MCF 10A (cell line): ENCODE measurements at regions of chr1 and their contacts with region 1.

Region 1: GRCh38 chr1:15835741-15836510 is 11.6 kb upstream of the SPEN start:
- DNase-seq: peak; percentile 99
- H3K4me3 Mint-ChIP-seq: peak overlapping the region; percentile 87
- H3K27ac Mint-ChIP-seq: peak overlapping the region; percentile 93
- H3K4me1 Mint-ChIP-seq: peaks cover 6% of the 10 kb centered on the region
- H3K27me3 Mint-ChIP-seq: no peaks in the 10 kb centered on the region
- CTCF ChIP-seq: no peak

Region 2: GRCh38 chr1:15788624-15789301 is 47.2 kb before region 1 on chr1:
- CTCF ChIA-PET with region 1: interaction called, 6 read pairs
- POLR2A ChIA-PET with region 1: interaction called, 27 read pairs
- intact Hi-C with region 1: no loop called
- DNase-seq: peak; percentile 76
- H3K4me3 Mint-ChIP-seq: no peak overlapping the region
- H3K27ac Mint-ChIP-seq: peak overlapping the region; percentile 76
- H3K4me1 Mint-ChIP-seq: peaks cover 26% of the 10 kb centered on the region
- H3K27me3 Mint-ChIP-seq: no peaks in the 10 kb centered on the region
- CTCF ChIP-seq: no peak

Region 3: GRCh38 chr1:15803354-15803753 is 32.6 kb before region 1 on chr1:
- CTCF ChIA-PET with region 1: no interaction called
- POLR2A ChIA-PET with region 1: interaction called, 88 read pairs
- intact Hi-C with region 1: loop called (anchors 2 kb)
- DNase-seq: peak; percentile 54
- H3K4me3 Mint-ChIP-seq: no peak overlapping the region
- H3K27ac Mint-ChIP-seq: no peak overlapping the region
- H3K4me1 Mint-ChIP-seq: peaks cover 38% of the 10 kb centered on the region
- H3K27me3 Mint-ChIP-seq: no peaks in the 10 kb centered on the region
- CTCF ChIP-seq: peak; percentile 36

Region 4: GRCh38 chr1:15825800-15826199 is 10.1 kb before region 1 on chr1:
- CTCF ChIA-PET with region 1: no interaction called
- POLR2A ChIA-PET with region 1: interaction called, 15 read pairs
- intact Hi-C with region 1: no loop called
- DNase-seq: no peak
- H3K4me3 Mint-ChIP-seq: no peak overlapping the region
- H3K27ac Mint-ChIP-seq: no peak overlapping the region
- H3K4me1 Mint-ChIP-seq: peaks cover 12% of the 10 kb centered on the region
- H3K27me3 Mint-ChIP-seq: no peaks in the 10 kb centered on the region
- CTCF ChIP-seq: no peak

Region 5: GRCh38 chr1:15866721-15867201 is 30.8 kb after region 1 on chr1:
- CTCF ChIA-PET with region 1: interaction called, 3 read pairs
- POLR2A ChIA-PET with region 1: interaction called, 11 read pairs
- intact Hi-C with region 1: no loop called
- DNase-seq: no peak
- H3K4me3 Mint-ChIP-seq: no peak overlapping the region
- H3K27ac Mint-ChIP-seq: peak overlapping the region; percentile 73
- H3K4me1 Mint-ChIP-seq: peaks cover 21% of the 10 kb centered on the region
- H3K27me3 Mint-ChIP-seq: no peaks in the 10 kb centered on the region
- CTCF ChIP-seq: no peak

Region 6: GRCh38 chr1:15918962-15919715 is 83.2 kb after region 1 on chr1:
- CTCF ChIA-PET with region 1: interaction called, 6 read pairs
- POLR2A ChIA-PET with region 1: interaction called, 26 read pairs
- intact Hi-C with region 1: loop called (anchors 5 kb)
- DNase-seq: peak; percentile 79
- H3K4me3 Mint-ChIP-seq: peak overlapping the region; percentile 5
- H3K27ac Mint-ChIP-seq: peak overlapping the region; percentile 41
- H3K4me1 Mint-ChIP-seq: peaks cover 23% of the 10 kb centered on the region
- H3K27me3 Mint-ChIP-seq: no peaks in the 10 kb centered on the region
- CTCF ChIP-seq: no peak

Region 7: GRCh38 chr1:15975805-15976680 is 140.1 kb after region 1 on chr1 and contains the start of gene ZBTB17:
- CTCF ChIA-PET with region 1: no interaction called
- POLR2A ChIA-PET with region 1: interaction called, 10 read pairs
- intact Hi-C with region 1: no loop called
- DNase-seq: peak; percentile 91
- H3K4me3 Mint-ChIP-seq: peak within 1 kb of the TSS; percentile 77
- H3K27ac Mint-ChIP-seq: peak within 1 kb of the TSS; percentile 67
- H3K4me1 Mint-ChIP-seq: peaks cover 15% of the 10 kb centered on the region
- H3K27me3 Mint-ChIP-seq: no peaks in the 10 kb centered on the region
- CTCF ChIP-seq: no peak
- total RNA-seq, gene ZBTB17: 46.3 and 48.3 TPM in 2 replicates